ENCODE measurements at regions of chr11 and their contacts with region 1.

Region 1: DNA sequence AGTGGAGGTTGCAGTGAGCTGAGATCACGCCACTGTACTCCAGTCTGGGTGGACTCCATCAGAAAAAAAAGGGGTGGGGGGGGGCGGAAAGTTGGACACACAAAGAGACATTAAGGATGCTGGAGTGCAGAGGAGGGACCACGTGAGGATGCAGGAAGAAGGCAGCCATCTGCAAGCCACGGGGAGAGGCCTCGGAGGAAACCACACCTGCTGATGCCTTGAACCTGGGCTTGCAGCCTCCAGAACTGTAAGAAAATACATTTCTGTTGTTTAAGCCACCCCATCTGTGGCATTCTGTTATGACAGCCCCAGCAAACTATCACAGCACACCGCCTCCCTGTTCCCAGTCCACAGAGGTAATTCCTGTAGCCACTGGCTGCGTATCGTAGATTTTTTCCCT is 9.2 kb upstream of the STIP1 start:
- DNase-seq: no peak
- ATAC-seq: no peak
- H3K4me3 Mint-ChIP-seq: no peak overlapping the region
- H3K27ac Mint-ChIP-seq: no peak overlapping the region
- H3K4me1 Mint-ChIP-seq: peaks cover 11% of the 10 kb centered on the region
- H3K27me3 Mint-ChIP-seq: peaks cover 9% of the 10 kb centered on the region
- CTCF ChIP-seq: no peak

Region 2: GRCh38 chr11:64060861-64061444 is 115.8 kb before region 1 on chr11:
- CTCF ChIA-PET with region 1: no interaction called
- POLR2A ChIA-PET with region 1: no interaction called
- DNase-seq: peak; percentile 83
- ATAC-seq: peak; percentile 73
- H3K4me3 Mint-ChIP-seq: peak overlapping the region; percentile 74
- H3K27ac Mint-ChIP-seq: no peak overlapping the region
- H3K4me1 Mint-ChIP-seq: peaks cover 9% of the 10 kb centered on the region
- H3K27me3 Mint-ChIP-seq: peaks cover 98% of the 10 kb centered on the region
- CTCF ChIP-seq: no peak

Region 3: GRCh38 chr11:64276653-64277431 is 100.1 kb after region 1 on chr11:
- CTCF ChIA-PET with region 1: no interaction called
- POLR2A ChIA-PET with region 1: interaction called, 10 read pairs
- DNase-seq: no peak
- ATAC-seq: no peak
- H3K4me3 Mint-ChIP-seq: no peak overlapping the region
- H3K27ac Mint-ChIP-seq: no peak overlapping the region
- H3K4me1 Mint-ChIP-seq: peaks cover 21% of the 10 kb centered on the region
- H3K27me3 Mint-ChIP-seq: no peaks in the 10 kb centered on the region
- CTCF ChIP-seq: no peak